A673 (cell line): ENCODE measurements at regions of chr13 and their contacts with region 1.

Region 1: DNA sequence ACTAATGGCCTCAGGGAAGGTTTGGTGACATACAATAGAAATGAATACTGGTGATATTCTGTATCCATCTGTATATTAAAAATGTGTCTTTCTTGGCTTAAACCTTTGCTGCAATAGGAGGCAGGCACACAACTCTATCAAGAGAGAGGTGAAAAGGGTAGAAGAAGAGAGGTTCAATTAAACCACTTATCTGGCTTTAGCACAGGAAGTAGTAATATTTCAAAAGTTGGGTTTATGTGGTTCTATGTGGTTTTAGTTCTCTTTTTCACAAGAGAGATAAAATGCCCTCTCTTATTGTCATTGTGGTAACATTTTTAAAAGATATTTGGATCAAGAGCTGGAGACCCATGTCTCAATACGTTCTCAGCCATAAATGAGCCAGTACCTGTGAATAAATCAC is 146.2 kb upstream of the FNDC3A start:
- DNase-seq: no peak
- H3K4me3 ChIP-seq: no peak overlapping the region
- H3K27ac ChIP-seq: no peak overlapping the region
- H3K4me1 ChIP-seq: no peaks in the 10 kb centered on the region
- H3K27me3 ChIP-seq: no peaks in the 10 kb centered on the region
- CTCF ChIP-seq: no peak

Region 2: DNA sequence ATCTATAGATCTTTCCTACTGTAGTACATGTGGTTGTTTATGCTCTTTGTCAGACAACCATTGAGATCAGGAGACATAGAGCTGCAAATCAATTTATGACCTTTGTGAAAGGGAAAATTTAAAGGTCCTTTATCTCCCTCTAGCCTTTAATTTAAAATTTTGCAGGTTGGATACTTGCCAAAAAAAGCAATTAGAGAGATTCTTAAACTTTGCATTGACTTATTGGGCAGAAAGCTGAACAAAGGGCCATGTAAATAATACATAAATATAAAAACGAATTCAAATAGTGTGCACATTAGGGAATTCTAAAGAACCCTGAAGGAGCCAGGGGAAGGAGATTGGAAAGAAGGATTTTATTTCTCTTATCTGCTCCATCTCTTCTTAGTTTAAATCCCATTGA is 548.0 kb before region 1 on chr13:
- CTCF ChIA-PET with region 1: no interaction called
- POLR2A ChIA-PET with region 1: no interaction called
- intact Hi-C with region 1: no loop called
- DNase-seq: no peak
- H3K4me3 ChIP-seq: no peak overlapping the region
- H3K27ac ChIP-seq: no peak overlapping the region
- H3K4me1 ChIP-seq: peaks cover 7% of the 10 kb centered on the region
- H3K27me3 ChIP-seq: no peaks in the 10 kb centered on the region
- CTCF ChIP-seq: no peak

Region 3: GRCh38 chr13:49495783-49496762 is 666.5 kb after region 1 on chr13 and contains the start of gene PHF11:
- CTCF ChIA-PET with region 1: no interaction called
- POLR2A ChIA-PET with region 1: interaction called, 12 read pairs
- intact Hi-C with region 1: no loop called
- DNase-seq: peak; percentile 81
- H3K4me3 ChIP-seq: peak within 1 kb of the TSS; percentile 51
- H3K27ac ChIP-seq: peak within 1 kb of the TSS; percentile 72
- H3K4me1 ChIP-seq: no peaks in the 10 kb centered on the region
- H3K27me3 ChIP-seq: no peaks in the 10 kb centered on the region
- CTCF ChIP-seq: no peak
- total RNA-seq, gene PHF11: 16.0 and 17.0 TPM in 2 replicates